ENCODE measurements at regions of chr7 and their contacts with region 1.

Region 1: GRCh38 chr7:47453093-47454049 is 128.5 kb downstream of the TNS3 start:
- DNase-seq: peak; percentile 73 to 83 (median 73)
- H3K4me3 ChIP-seq: no peak overlapping the region
- H3K4me3 Mint-ChIP-seq: peak overlapping the region in 1 of 2 donors; percentile 2
- H3K27ac ChIP-seq: peak overlapping the region; percentile 42 to 71
- H3K27ac Mint-ChIP-seq: peak overlapping the region; percentile 48 to 91 (median 71)
- H3K4me1 ChIP-seq: peaks cover 17 to 25% of the 10 kb centered on the region in 2 donors
- H3K4me1 Mint-ChIP-seq: peaks cover 37% of the 10 kb centered on the region
- H3K27me3 ChIP-seq: no peaks in the 10 kb centered on the region
- H3K27me3 Mint-ChIP-seq: peaks cover 0 to 2% (median 0%) of the 10 kb centered on the region in 3 donors
- CTCF ChIP-seq: no peak

Region 2: GRCh38 chr7:47482013-47482875 is 28.9 kb after region 1 on chr7:
- intact Hi-C with region 1: loop called in 1 of 2 experiments (anchors 5 kb)
- DNase-seq: peak; percentile 70 to 82 (median 75)
- H3K4me3 ChIP-seq: peak overlapping the region in 1 of 3 experiments; percentile 5
- H3K4me3 Mint-ChIP-seq: peak overlapping the region; percentile 44 to 53
- H3K27ac ChIP-seq: peak overlapping the region in 1 of 2 donors; percentile 63
- H3K27ac Mint-ChIP-seq: peak overlapping the region; percentile 46 to 95 (median 87)
- H3K4me1 ChIP-seq: peaks cover 41 to 44% of the 10 kb centered on the region in 2 donors
- H3K4me1 Mint-ChIP-seq: peaks cover 54% of the 10 kb centered on the region
- H3K27me3 ChIP-seq: no peaks in the 10 kb centered on the region
- H3K27me3 Mint-ChIP-seq: peaks cover 0 to 2% (median 0%) of the 10 kb centered on the region in 3 donors
- CTCF ChIP-seq: no peak

Region 3: DNA sequence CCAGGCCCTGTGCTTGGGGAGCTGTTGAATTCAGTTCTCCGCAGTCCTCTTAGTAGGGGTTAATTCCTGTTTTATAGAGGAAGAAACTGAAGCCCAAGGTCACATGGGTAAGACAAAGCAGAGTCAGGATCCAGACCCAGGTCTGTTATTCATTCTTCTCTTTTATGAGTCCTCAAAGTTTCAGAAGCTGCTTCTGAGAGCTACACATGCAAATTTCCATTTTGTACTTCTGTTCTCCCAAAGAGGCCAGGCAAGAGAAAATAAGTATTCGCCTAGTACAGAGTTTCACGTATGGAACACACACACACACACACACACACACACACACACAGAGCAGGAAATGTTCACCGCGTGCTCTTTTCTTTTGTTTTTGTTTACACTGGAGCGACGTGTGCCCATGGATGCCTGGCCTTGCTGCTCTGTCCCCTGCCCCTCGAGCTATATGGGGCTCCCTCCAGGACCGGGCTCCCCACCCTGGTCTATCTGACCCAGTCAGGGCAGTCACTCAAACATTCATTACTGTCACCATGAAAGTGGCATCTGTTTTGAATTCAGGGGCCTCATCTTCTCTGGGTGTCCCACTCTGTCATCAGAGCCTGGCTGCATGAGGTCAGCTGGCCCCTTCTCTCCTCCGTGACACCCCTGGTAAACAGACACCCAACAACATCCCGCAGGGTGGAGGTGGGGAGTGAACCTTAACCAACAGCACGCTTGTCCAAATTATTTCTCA is 44.2 kb after region 1 on chr7:
- intact Hi-C with region 1: loop called in 1 of 2 experiments (anchors 5 kb)
- DNase-seq: peak; percentile 75 to 89 (median 81)
- H3K4me3 ChIP-seq: peak overlapping the region in 1 of 3 experiments; percentile 40
- H3K4me3 Mint-ChIP-seq: peak overlapping the region; percentile 58 to 90
- H3K27ac ChIP-seq: peak overlapping the region; percentile 76 to 89
- H3K27ac Mint-ChIP-seq: peak overlapping the region; percentile 90 to 98 (median 94)
- H3K4me1 ChIP-seq: peaks cover 65 to 71% of the 10 kb centered on the region in 2 donors
- H3K4me1 Mint-ChIP-seq: peaks cover 82% of the 10 kb centered on the region
- H3K27me3 ChIP-seq: no peaks in the 10 kb centered on the region
- H3K27me3 Mint-ChIP-seq: peaks cover 0 to 5% (median 0%) of the 10 kb centered on the region in 3 donors
- CTCF ChIP-seq: no peak

Region 4: GRCh38 chr7:47536661-47537611 is 83.6 kb after region 1 on chr7:
- intact Hi-C with region 1: no loop called
- DNase-seq: no peak
- H3K4me3 ChIP-seq: peak overlapping the region in 1 of 3 experiments; percentile 36
- H3K4me3 Mint-ChIP-seq: peak overlapping the region; percentile 43 to 76
- H3K27ac ChIP-seq: no peak overlapping the region
- H3K27ac Mint-ChIP-seq: peak overlapping the region in 1 of 7 donors; percentile 10
- H3K4me1 ChIP-seq: peaks cover 7 to 12% of the 10 kb centered on the region in 2 donors
- H3K4me1 Mint-ChIP-seq: peaks cover 50% of the 10 kb centered on the region
- H3K27me3 ChIP-seq: peaks cover 0 to 16% of the 10 kb centered on the region in 2 donors
- H3K27me3 Mint-ChIP-seq: peaks cover 17 to 30% (median 24%) of the 10 kb centered on the region in 3 donors
- CTCF ChIP-seq: no peak

Measured in CD14-positive monocyte (primary cell).